Naive thymus-derived CD4-positive, alpha-beta T cell (primary cell): ENCODE measurements at regions of chr2 and their contacts with region 1.

Region 1: DNA sequence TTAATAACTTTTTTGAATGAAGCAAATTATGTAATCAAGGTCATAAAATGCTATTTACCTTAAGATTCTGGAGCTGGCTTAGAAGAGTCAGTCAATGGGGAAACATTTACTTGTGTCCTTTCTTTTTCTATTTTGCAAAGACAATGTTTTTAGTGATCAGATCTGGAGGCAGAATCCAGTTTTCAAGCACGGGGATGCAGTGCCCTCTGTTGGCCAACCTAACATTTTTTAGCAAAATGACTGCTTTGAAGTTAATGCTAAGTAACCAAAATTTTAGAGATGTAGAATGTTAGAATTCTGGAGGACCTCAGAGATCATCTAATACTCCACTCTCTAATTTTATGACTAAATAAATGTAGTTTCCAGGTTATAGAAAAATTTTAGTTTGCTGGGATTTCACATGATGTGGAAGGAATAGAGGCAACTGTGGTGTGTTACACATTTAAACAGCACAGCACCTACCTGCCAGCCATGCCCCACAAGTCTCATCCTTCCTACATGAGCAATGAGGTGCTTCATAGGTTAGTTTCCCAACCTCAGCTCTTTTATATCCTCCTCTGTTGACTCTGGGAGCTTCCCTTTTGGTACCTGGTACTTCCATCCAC is 23.6 kb upstream of the SLC9A4 start:
- DNase-seq: peak; percentile 16 to 66 (median 52)
- ATAC-seq: peak; percentile 69
- H3K4me3 ChIP-seq: no peak overlapping the region
- H3K4me3 Mint-ChIP-seq: no peak overlapping the region
- H3K27ac ChIP-seq: no peak overlapping the region
- H3K27ac Mint-ChIP-seq: no peak overlapping the region
- H3K4me1 ChIP-seq: no peaks in the 10 kb centered on the region
- H3K4me1 Mint-ChIP-seq: peaks cover 0 to 10% (median 4%) of the 10 kb centered on the region in 7 donors
- H3K27me3 ChIP-seq: no peaks in the 10 kb centered on the region
- H3K27me3 Mint-ChIP-seq: no peaks in the 10 kb centered on the region

Region 2: GRCh38 chr2:101883863-101884262 is 565.6 kb before region 1 on chr2:
- CTCF ChIA-PET with region 1: interaction called, 3 read pairs
- POLR2A ChIA-PET with region 1: no interaction called
- intact Hi-C with region 1: loop called (anchors 1 to 2 kb)
- DNase-seq: peak in 5 of 9 donors; percentile 28 to 45 (median 36)
- ATAC-seq: peak; percentile 87
- H3K4me3 ChIP-seq: no peak overlapping the region
- H3K4me3 Mint-ChIP-seq: no peak overlapping the region
- H3K27ac ChIP-seq: no peak overlapping the region
- H3K27ac Mint-ChIP-seq: peak overlapping the region in 4 of 9 donors; percentile 38 to 62 (median 52)
- H3K4me1 ChIP-seq: no peaks in the 10 kb centered on the region
- H3K4me1 Mint-ChIP-seq: peaks cover 0 to 16% (median 5%) of the 10 kb centered on the region in 7 donors
- H3K27me3 ChIP-seq: no peaks in the 10 kb centered on the region
- H3K27me3 Mint-ChIP-seq: no peaks in the 10 kb centered on the region

Region 3: GRCh38 chr2:102020596-102021181 is 428.8 kb before region 1 on chr2:
- CTCF ChIA-PET with region 1: interaction called, 11 read pairs
- POLR2A ChIA-PET with region 1: no interaction called
- intact Hi-C with region 1: loop called (anchors 1 kb)
- DNase-seq: peak; percentile 61 to 82 (median 76)
- ATAC-seq: peak; percentile 96
- H3K4me3 ChIP-seq: no peak overlapping the region
- H3K4me3 Mint-ChIP-seq: no peak overlapping the region
- H3K27ac ChIP-seq: no peak overlapping the region
- H3K27ac Mint-ChIP-seq: no peak overlapping the region
- H3K4me1 ChIP-seq: no peaks in the 10 kb centered on the region
- H3K4me1 Mint-ChIP-seq: peaks cover 0 to 12% (median 0%) of the 10 kb centered on the region in 7 donors
- H3K27me3 ChIP-seq: no peaks in the 10 kb centered on the region
- H3K27me3 Mint-ChIP-seq: peaks cover 0 to 5% (median 0%) of the 10 kb centered on the region in 5 donors

Region 4: DNA sequence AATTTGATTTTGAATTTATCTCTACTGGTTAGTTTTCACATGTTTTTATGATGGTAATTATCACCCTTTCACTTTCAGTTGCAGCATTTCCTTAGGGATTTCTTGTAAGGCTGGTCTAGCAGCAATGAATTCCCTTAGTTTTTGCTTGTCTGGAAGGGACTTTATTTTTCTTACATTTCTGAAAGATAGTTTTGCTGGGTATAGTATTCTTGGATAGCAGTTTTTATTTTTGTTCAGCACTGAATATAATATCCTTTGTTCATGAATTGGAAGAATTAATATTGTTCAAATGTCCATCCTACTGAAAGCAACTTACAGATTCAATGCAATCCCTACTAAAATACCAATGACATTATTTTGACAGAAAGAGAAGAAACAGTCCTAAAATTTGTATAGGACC is 232.4 kb before region 1 on chr2:
- CTCF ChIA-PET with region 1: no interaction called
- POLR2A ChIA-PET with region 1: no interaction called
- intact Hi-C with region 1: no loop called
- DNase-seq: no peak
- ATAC-seq: no peak
- H3K4me3 ChIP-seq: no peak overlapping the region
- H3K4me3 Mint-ChIP-seq: no peak overlapping the region
- H3K27ac ChIP-seq: no peak overlapping the region
- H3K27ac Mint-ChIP-seq: no peak overlapping the region
- H3K4me1 ChIP-seq: peaks cover 0 to 3% of the 10 kb centered on the region in 2 donors
- H3K4me1 Mint-ChIP-seq: peaks cover 9 to 19% (median 17%) of the 10 kb centered on the region in 7 donors
- H3K27me3 ChIP-seq: no peaks in the 10 kb centered on the region
- H3K27me3 Mint-ChIP-seq: peaks cover 0 to 5% (median 0%) of the 10 kb centered on the region in 5 donors

Region 5: DNA sequence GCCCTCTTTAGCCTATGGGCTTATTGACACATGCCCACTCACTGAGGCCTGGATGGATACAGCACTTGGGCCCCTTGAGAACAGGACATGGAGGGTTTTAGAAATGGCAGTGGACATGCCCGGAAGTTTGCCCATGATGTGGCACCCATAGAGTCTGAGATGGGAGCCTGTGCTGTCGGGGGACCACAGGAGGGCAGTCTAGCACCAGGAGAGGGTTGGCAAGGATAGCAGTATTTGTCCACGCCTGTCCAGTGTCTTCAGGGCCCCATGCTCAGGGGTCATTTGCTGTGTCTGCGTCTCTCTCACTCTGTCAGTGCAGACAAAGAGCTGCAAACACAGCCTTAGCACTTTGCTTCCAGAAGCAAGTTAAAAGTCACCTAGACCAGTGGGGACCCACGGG is 214.0 kb before region 1 on chr2:
- CTCF ChIA-PET with region 1: interaction called, 32 read pairs
- POLR2A ChIA-PET with region 1: no interaction called
- intact Hi-C with region 1: loop called in 1 of 2 experiments (anchors 1 kb)
- DNase-seq: no peak
- ATAC-seq: peak; percentile 56
- H3K4me3 ChIP-seq: no peak overlapping the region
- H3K4me3 Mint-ChIP-seq: no peak overlapping the region
- H3K27ac ChIP-seq: no peak overlapping the region
- H3K27ac Mint-ChIP-seq: peak overlapping the region in 2 of 9 donors; percentile 21 to 23
- H3K4me1 ChIP-seq: peaks cover 0 to 1% of the 10 kb centered on the region in 2 donors
- H3K4me1 Mint-ChIP-seq: peaks cover 0 to 46% (median 2%) of the 10 kb centered on the region in 7 donors
- H3K27me3 ChIP-seq: no peaks in the 10 kb centered on the region
- H3K27me3 Mint-ChIP-seq: peaks cover 0 to 4% (median 0%) of the 10 kb centered on the region in 5 donors

Region 6: GRCh38 chr2:102271844-102272243 is 177.6 kb before region 1 on chr2:
- CTCF ChIA-PET with region 1: no interaction called
- POLR2A ChIA-PET with region 1: no interaction called
- intact Hi-C with region 1: loop called in 1 of 2 experiments (anchors 1 kb)
- DNase-seq: peak in 4 of 9 donors; percentile 16 to 32 (median 26)
- ATAC-seq: peak; percentile 68
- H3K4me3 ChIP-seq: no peak overlapping the region
- H3K4me3 Mint-ChIP-seq: peak overlapping the region in 4 of 10 donors; percentile 5 to 55 (median 28)
- H3K27ac ChIP-seq: no peak overlapping the region
- H3K27ac Mint-ChIP-seq: peak overlapping the region in 3 of 9 donors; percentile 18 to 32 (median 28)
- H3K4me1 ChIP-seq: peaks cover 0 to 10% of the 10 kb centered on the region in 2 donors
- H3K4me1 Mint-ChIP-seq: peaks cover 7 to 54% (median 10%) of the 10 kb centered on the region in 7 donors
- H3K27me3 ChIP-seq: no peaks in the 10 kb centered on the region
- H3K27me3 Mint-ChIP-seq: peaks cover 0 to 22% (median 0%) of the 10 kb centered on the region in 5 donors